Tibial artery (tissue), 4 donors: ENCODE measurements at regions of chr2 and their contacts with region 1.

Region 1: DNA sequence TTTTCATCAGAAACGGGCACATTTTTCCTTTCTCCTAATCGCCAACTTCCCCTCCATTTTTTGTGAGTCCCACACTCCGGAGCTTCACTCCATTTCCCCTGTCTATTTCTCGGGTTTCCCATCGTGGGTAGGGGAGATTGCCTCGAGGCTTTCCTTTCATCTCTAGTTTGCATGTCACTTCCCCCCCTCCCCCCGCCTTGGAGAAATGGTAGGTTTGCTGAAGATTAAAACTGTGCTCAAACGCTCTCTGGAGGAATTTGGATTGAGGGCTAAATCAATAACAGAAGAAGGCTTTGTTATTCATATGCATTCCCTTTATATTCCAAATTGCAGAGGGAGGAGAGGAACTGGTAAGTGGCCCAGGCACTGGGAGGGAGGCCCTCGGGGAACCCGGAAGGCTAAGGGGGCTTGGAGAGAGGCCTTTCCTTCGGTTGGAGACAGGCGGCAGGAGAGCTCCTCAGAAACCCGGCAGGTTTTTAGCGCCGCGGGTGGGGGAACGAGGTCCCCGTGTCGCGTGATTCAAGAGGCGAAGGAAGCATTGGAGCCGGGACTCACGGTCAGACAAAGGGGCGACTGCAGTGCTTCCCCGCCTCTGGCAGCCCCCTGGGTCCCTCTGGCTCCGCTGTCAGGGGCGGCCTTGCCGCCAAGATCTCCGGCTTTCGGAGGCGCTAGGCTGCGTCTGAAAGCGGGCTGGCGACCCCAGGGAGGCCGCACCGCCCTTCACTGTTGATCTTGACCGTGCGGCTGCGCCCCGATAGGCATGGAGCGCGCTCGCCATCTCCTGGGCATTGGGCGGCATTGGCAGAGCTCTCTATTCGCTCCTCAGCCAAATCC is 2.4 kb upstream of the HOXD12 start:
- DNase-seq: peak in 1 of 2 donors; percentile 59
- H3K4me3 ChIP-seq: peak overlapping the region; percentile 13 to 49
- H3K27ac ChIP-seq: no peak overlapping the region
- H3K4me1 ChIP-seq: peaks cover 0 to 58% (median 49%) of the 10 kb centered on the region in 4 donors
- H3K27me3 ChIP-seq: peaks cover 14 to 100% of the 10 kb centered on the region in 2 donors
- CTCF ChIP-seq: peak; percentile 77 to 94

Region 2: GRCh38 chr2:175366815-175367214 is 730.4 kb before region 1 on chr2:
- intact Hi-C with region 1: loop called (anchors 5 kb)
- DNase-seq: peak in 1 of 2 donors; percentile 22
- H3K4me3 ChIP-seq: no peak overlapping the region
- H3K27ac ChIP-seq: no peak overlapping the region
- H3K4me1 ChIP-seq: no peaks in the 10 kb centered on the region
- H3K27me3 ChIP-seq: peaks cover 0 to 38% of the 10 kb centered on the region in 2 donors
- CTCF ChIP-seq: peak; percentile 51 to 52

Region 3: GRCh38 chr2:175948191-175948590 is 149.0 kb before region 1 on chr2:
- intact Hi-C with region 1: no loop called
- DNase-seq: no peak
- H3K4me3 ChIP-seq: no peak overlapping the region
- H3K27ac ChIP-seq: no peak overlapping the region
- H3K4me1 ChIP-seq: no peaks in the 10 kb centered on the region
- H3K27me3 ChIP-seq: no peaks in the 10 kb centered on the region
- CTCF ChIP-seq: no peak

Region 4: DNA sequence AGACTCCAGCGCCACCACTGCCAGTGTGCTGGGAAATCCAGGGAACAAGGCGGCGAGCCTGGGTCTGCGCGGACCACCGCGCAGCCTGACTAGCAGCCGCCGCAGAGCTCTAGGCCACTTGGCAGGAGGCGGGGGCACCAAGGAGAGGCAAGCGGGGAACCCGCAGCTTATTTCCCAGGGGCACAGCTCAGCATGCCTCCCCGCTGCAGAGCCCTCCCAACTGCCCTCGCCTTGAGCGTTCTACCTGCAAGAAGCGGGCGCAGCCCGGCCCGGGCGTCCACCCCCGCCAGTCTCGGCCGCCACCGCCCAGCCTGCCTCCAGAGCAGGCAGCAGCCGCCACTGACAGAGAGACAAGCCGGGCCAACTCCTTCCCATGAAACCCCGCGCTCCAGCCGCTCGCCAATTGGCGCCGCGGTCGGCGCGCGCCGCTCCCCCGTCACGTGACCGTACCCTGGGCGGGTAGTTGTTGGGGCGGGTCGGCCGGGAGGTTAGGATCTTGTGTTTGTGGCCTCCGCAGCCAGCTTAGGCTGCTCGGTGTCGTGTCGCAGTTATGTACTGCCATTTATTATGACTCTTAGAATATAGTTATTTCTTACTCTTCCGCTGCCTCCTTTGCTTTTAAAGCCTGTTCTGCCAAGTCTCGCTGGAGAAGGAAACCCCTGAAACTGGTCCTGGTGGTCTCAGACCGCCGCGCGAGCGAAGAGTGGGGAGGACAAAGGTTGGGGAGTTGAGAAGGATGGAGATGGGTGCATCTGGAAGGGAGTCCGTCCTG is 95.1 kb before region 1 on chr2 and contains the start of gene LNPK:
- intact Hi-C with region 1: loop called (anchors 5 kb)
- DNase-seq: peak; percentile 91 to 96
- H3K4me3 ChIP-seq: peak within 1 kb of the TSS; percentile 82 to 84
- H3K27ac ChIP-seq: peak within 1 kb of the TSS; percentile 87 to 89
- H3K4me1 ChIP-seq: peaks cover 0 to 21% (median 6%) of the 10 kb centered on the region in 4 donors
- H3K27me3 ChIP-seq: no peaks in the 10 kb centered on the region
- CTCF ChIP-seq: no peak

Region 5: GRCh38 chr2:176174382-176174823 is 77.2 kb after region 1 on chr2:
- intact Hi-C with region 1: no loop called
- DNase-seq: no peak
- H3K4me3 ChIP-seq: no peak overlapping the region
- H3K27ac ChIP-seq: no peak overlapping the region
- H3K4me1 ChIP-seq: peaks cover 0 to 19% (median 13%) of the 10 kb centered on the region in 4 donors
- H3K27me3 ChIP-seq: peaks cover 0 to 80% of the 10 kb centered on the region in 2 donors
- CTCF ChIP-seq: no peak

Region 6: DNA sequence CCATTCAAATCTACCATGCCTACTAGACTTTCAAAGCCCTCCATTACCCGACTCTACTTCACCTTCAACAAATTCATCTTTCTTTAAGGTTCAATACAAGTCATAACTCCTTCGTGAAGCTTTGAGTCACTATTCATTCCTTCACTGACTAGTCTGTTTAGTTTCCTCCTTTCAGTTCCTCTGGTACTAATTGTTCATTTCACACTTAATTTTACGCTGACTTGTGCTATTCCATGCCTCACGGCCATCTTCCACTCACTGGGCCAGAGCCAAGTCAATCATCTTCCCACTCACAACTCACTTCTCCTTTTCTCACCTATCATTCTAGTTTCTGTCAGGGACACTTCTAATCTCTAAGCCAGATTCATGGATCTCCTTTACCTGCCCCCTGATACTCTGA is 308.3 kb after region 1 on chr2:
- intact Hi-C with region 1: no loop called
- DNase-seq: no peak
- H3K4me3 ChIP-seq: no peak overlapping the region
- H3K27ac ChIP-seq: no peak overlapping the region
- H3K4me1 ChIP-seq: no peaks in the 10 kb centered on the region
- H3K27me3 ChIP-seq: no peaks in the 10 kb centered on the region
- CTCF ChIP-seq: no peak